Ascending aorta (tissue), 2 donors: ENCODE measurements at regions of chr12 and their contacts with region 1.

Region 1: GRCh38 chr12:108950991-108951739 is 69.7 kb downstream of the SVOP start:
- DNase-seq: peak in 1 of 2 donors; percentile 85
- H3K4me3 ChIP-seq: peak overlapping the region in 1 of 2 donors; percentile 34
- H3K27ac ChIP-seq: no peak overlapping the region
- H3K4me1 ChIP-seq: no peaks in the 10 kb centered on the region
- H3K27me3 ChIP-seq: no peaks in the 10 kb centered on the region
- CTCF ChIP-seq: peak; percentile 76 to 87 (median 87)

Region 2: GRCh38 chr12:108618079-108618952 is 332.8 kb before region 1 on chr12:
- intact Hi-C with region 1: loop called (anchors 5 kb)
- DNase-seq: peak in 1 of 2 donors; percentile 87
- H3K4me3 ChIP-seq: no peak overlapping the region
- H3K27ac ChIP-seq: no peak overlapping the region
- H3K4me1 ChIP-seq: no peaks in the 10 kb centered on the region
- H3K27me3 ChIP-seq: no peaks in the 10 kb centered on the region
- CTCF ChIP-seq: peak; percentile 89 to 99 (median 96)

Region 3: GRCh38 chr12:108838194-108839017 is 112.8 kb before region 1 on chr12:
- intact Hi-C with region 1: no loop called
- DNase-seq: peak; percentile 95 to 98
- H3K4me3 ChIP-seq: no peak overlapping the region
- H3K27ac ChIP-seq: peak overlapping the region; percentile 96 to 97
- H3K4me1 ChIP-seq: peaks cover 40 to 62% of the 10 kb centered on the region in 2 donors
- H3K27me3 ChIP-seq: no peaks in the 10 kb centered on the region
- CTCF ChIP-seq: no peak